PC-9 (cell line): ENCODE measurements at regions of chr2 and their contacts with region 1.

Region 1: DNA sequence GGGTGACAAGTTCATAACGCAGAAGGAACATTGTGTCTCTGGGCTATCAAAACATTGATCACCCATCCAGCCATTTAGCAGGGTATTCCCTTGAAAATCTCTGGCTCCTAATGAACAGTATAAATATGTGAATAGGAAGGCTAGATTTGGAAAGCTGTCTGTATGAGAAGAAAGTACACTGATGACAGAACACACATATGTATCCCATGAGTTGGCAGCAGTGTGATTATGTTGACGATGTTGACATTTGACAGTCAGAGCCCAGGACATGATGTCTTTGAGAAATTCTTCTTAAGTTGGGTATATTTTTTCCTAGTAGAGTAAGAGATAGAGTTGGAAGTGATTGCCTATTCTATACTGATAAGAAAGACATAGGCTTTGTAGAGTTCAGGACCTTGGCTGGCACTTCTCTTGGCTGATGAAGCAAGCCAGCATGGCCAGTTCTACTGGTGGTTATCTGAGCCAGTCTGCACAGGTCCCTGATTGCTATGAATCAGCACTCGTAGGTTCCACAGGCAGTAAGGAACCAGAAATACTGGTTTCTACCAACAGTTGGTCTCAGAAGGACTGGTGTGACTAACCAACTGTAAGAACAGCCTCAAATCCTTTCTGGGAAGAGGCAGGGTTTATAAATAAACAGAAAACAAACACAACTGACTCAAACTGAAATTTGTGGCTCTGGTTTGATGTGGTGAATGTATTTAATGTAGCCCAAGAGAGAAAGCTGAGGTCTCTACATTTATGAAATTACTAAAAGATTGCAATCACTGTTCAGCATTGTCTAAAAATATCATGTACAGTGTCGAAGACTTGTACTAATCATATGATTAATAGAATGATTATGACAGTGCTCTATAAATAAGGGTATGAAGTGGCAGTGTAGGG is 43.9 kb upstream of the RAPH1 start:
- DNase-seq: peak; percentile 68 to 98
- H3K4me3 ChIP-seq: peak overlapping the region; percentile 16; the same call in 1 of the 2 replicates
- H3K27ac ChIP-seq: peak overlapping the region; percentile 91
- H3K4me1 ChIP-seq: peaks cover 61% of the 10 kb centered on the region
- H3K27me3 ChIP-seq: no peaks in the 10 kb centered on the region
- CTCF ChIP-seq: no peak

Region 2: GRCh38 chr2:203535078-203535783 is 43.8 kb before region 1 on chr2 and contains the start of gene RAPH1:
- CTCF ChIA-PET with region 1: no interaction called
- POLR2A ChIA-PET with region 1: interaction called, 3 read pairs
- intact Hi-C with region 1: loop called (anchors 5 kb)
- DNase-seq: peak; percentile 58 to 69
- H3K4me3 ChIP-seq: peak within 1 kb of the TSS; percentile 79
- H3K27ac ChIP-seq: peak within 1 kb of the TSS; percentile 74
- H3K4me1 ChIP-seq: peaks cover 24% of the 10 kb centered on the region
- H3K27me3 ChIP-seq: no peaks in the 10 kb centered on the region
- CTCF ChIP-seq: no peak
- total RNA-seq, gene RAPH1: 16.5 and 16.8 TPM in 2 replicates

Region 3: DNA sequence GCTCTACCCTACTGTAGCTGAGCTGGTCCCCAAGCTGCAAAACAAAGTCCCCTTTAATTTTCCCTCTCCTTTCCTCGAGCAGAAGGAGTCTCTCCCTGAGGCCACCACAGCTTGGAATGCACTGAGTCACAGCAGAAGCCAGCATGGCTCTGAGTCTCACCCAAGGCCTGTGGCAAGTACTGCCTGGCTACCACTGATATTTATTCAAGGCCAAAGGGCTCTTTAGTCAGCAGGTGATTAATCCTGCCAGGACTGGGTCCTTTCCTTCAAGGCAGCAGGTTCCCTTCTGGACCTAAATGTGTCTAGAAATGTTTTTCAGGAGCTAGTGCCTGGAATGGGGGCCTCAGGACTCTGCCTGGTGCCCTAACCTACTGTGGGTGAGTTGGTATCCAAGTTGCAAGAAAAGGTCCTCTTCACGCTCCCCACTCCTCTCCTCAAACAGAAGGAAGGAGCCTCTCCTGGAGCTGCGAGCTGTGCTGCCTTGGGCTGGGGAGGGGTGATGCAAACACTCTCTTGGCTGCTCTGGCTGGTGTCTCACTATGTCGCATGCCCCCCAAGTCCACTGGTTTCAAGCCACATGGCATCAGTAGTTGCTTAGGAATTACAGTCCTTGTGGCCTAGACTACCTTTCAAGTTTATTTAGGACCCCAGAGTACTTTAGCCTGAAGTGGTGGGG is 180.8 kb after region 1 on chr2:
- CTCF ChIA-PET with region 1: no interaction called
- POLR2A ChIA-PET with region 1: no interaction called
- intact Hi-C with region 1: loop called (anchors 1 kb)
- DNase-seq: peak; percentile 74 to 95
- H3K4me3 ChIP-seq: peak overlapping the region; percentile 27; the same call in 1 of the 2 replicates
- H3K27ac ChIP-seq: peak overlapping the region; percentile 93
- H3K4me1 ChIP-seq: peaks cover 40% of the 10 kb centered on the region
- H3K27me3 ChIP-seq: no peaks in the 10 kb centered on the region
- CTCF ChIP-seq: no peak

Region 4: GRCh38 chr2:203782262-203782976 is 203.4 kb after region 1 on chr2:
- CTCF ChIA-PET with region 1: no interaction called
- POLR2A ChIA-PET with region 1: no interaction called
- intact Hi-C with region 1: loop called (anchors 2 kb)
- DNase-seq: peak; percentile 57 to 85
- H3K4me3 ChIP-seq: no peak overlapping the region
- H3K27ac ChIP-seq: no peak overlapping the region
- H3K4me1 ChIP-seq: peaks cover 12% of the 10 kb centered on the region
- H3K27me3 ChIP-seq: no peaks in the 10 kb centered on the region
- CTCF ChIP-seq: peak; percentile 70